Activated naive CD4-positive, alpha-beta T cell treated with anti-CD3 and anti-CD28 coated beads for 36 hours (primary cell): ENCODE measurements at regions of chr17 and their contacts with region 1.

Region 1: GRCh38 chr17:30716461-30717300 is 107.8 kb downstream of the CRLF3 start:
- DNase-seq: peak; percentile 36
- H3K4me3 Mint-ChIP-seq: no peak overlapping the region
- H3K27ac Mint-ChIP-seq: no peak overlapping the region
- H3K4me1 Mint-ChIP-seq: peaks cover 11% of the 10 kb centered on the region
- H3K27me3 Mint-ChIP-seq: no peaks in the 10 kb centered on the region

Region 2: GRCh38 chr17:30477083-30477773 is 239.5 kb before region 1 on chr17 and contains the start of gene GOSR1:
- CTCF ChIA-PET with region 1: interaction called, 8 read pairs
- intact Hi-C with region 1: loop called (anchors 5 kb)
- DNase-seq: peak; percentile 97
- H3K4me3 Mint-ChIP-seq: peak within 1 kb of the TSS; percentile 98
- H3K27ac Mint-ChIP-seq: peak within 1 kb of the TSS; percentile 97
- H3K4me1 Mint-ChIP-seq: peaks cover 36% of the 10 kb centered on the region
- H3K27me3 Mint-ChIP-seq: peaks cover 2% of the 10 kb centered on the region
- total RNA-seq, gene GOSR1: 33.9 to 37.3 TPM

Region 3: GRCh38 chr17:30519707-30520106 is 197.0 kb before region 1 on chr17:
- CTCF ChIA-PET with region 1: no interaction called
- intact Hi-C with region 1: no loop called
- DNase-seq: no peak
- H3K4me3 Mint-ChIP-seq: no peak overlapping the region
- H3K27ac Mint-ChIP-seq: peak overlapping the region; percentile 28
- H3K4me1 Mint-ChIP-seq: peaks cover 32% of the 10 kb centered on the region
- H3K27me3 Mint-ChIP-seq: no peaks in the 10 kb centered on the region

Region 4: DNA sequence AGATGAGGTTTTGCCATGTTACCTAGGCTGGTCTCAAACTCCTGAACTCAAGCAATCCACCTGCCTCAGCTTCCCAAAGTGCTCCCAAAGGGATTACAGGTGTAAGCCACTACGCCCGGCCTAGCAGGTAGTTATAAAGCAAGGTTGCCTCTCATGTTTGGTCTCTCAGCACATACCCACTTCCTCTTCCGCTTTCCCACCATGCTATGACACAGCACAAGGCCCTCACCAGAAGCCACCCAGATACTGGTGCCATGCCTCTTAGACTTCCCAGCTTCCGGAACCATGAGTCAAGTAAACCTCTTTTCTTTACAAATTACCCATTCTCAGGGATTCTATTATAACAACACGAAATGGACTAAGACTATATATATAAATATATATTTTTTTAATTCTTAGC is 998.8 kb after region 1 on chr17:
- CTCF ChIA-PET with region 1: no interaction called
- intact Hi-C with region 1: no loop called
- DNase-seq: no peak
- H3K4me3 Mint-ChIP-seq: no peak overlapping the region
- H3K27ac Mint-ChIP-seq: no peak overlapping the region
- H3K4me1 Mint-ChIP-seq: no peaks in the 10 kb centered on the region
- H3K27me3 Mint-ChIP-seq: no peaks in the 10 kb centered on the region